GM10248 (cell line): ENCODE measurements at regions of chr1 and their contacts with region 1.

Region 1: GRCh38 chr1:203172128-203173010 is 3.3 kb downstream of the MYBPH start:
- DNase-seq: peak; percentile 81
- CTCF ChIP-seq: peak; percentile 85

Region 2: GRCh38 chr1:202982715-202983430 is 189.5 kb before region 1 on chr1:
- CTCF ChIA-PET with region 1: no interaction called
- POLR2A ChIA-PET with region 1: no interaction called
- DNase-seq: no peak
- CTCF ChIP-seq: no peak

Region 3: DNA sequence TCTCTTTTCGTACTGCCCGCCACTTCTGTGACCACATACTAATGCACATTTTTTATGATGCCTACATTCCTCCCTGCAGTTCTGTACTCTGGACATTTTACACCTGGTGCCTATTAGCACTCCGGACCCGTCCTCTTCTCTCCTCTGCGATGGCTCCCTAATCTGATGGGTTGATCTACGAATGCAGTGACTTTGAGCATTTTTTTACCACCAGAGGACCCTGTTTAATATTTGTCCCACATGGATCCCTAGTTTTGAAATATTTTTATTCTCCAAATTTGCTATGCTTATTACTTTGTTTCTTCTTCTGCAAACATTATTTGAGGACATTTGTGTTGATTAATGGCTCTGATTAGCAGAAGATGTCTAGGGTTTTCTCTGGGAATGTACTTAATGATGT is 140.9 kb before region 1 on chr1:
- CTCF ChIA-PET with region 1: interaction called, 28 read pairs
- POLR2A ChIA-PET with region 1: no interaction called
- DNase-seq: no peak
- CTCF ChIP-seq: no peak

Region 4: GRCh38 chr1:203084588-203085502 is 87.5 kb before region 1 on chr1:
- CTCF ChIA-PET with region 1: interaction called, 10 read pairs
- POLR2A ChIA-PET with region 1: no interaction called
- DNase-seq: peak; percentile 69
- CTCF ChIP-seq: peak; percentile 49

Region 5: GRCh38 chr1:203148125-203148524 is 24.2 kb before region 1 on chr1:
- CTCF ChIA-PET with region 1: interaction called, 15 read pairs
- POLR2A ChIA-PET with region 1: no interaction called
- DNase-seq: no peak
- CTCF ChIP-seq: no peak

Region 6: GRCh38 chr1:203202431-203203245 is 30.3 kb after region 1 on chr1:
- CTCF ChIA-PET with region 1: interaction called, 14 read pairs
- POLR2A ChIA-PET with region 1: no interaction called
- DNase-seq: no peak
- CTCF ChIP-seq: no peak